Caco-2 (cell line): ENCODE measurements at regions of chr1 and their contacts with region 1.

Region 1: GRCh38 chr1:230978491-230979388 is at the starts of genes ARV1 and TTC13:
- DNase-seq: peak; percentile 99
- H3K4me3 ChIP-seq: peak within 1 kb of the TSS; percentile 96
- H3K4me3 Mint-ChIP-seq: no peak within 1 kb of the TSS
- H3K27ac Mint-ChIP-seq: peak within 1 kb of the TSS; percentile 65
- H3K4me1 ChIP-seq: peaks cover 18% of the 10 kb centered on the region
- H3K4me1 Mint-ChIP-seq: peaks cover 15% of the 10 kb centered on the region
- H3K27me3 ChIP-seq: no peaks in the 10 kb centered on the region
- H3K27me3 Mint-ChIP-seq: no peaks in the 10 kb centered on the region
- CTCF ChIP-seq: peak; percentile 59 to 84
- total RNA-seq, gene ARV1: 8.6 and 9.8 TPM in 2 replicates
- total RNA-seq, gene TTC13: 55.8 and 57.6 TPM in 2 replicates

Region 2: DNA sequence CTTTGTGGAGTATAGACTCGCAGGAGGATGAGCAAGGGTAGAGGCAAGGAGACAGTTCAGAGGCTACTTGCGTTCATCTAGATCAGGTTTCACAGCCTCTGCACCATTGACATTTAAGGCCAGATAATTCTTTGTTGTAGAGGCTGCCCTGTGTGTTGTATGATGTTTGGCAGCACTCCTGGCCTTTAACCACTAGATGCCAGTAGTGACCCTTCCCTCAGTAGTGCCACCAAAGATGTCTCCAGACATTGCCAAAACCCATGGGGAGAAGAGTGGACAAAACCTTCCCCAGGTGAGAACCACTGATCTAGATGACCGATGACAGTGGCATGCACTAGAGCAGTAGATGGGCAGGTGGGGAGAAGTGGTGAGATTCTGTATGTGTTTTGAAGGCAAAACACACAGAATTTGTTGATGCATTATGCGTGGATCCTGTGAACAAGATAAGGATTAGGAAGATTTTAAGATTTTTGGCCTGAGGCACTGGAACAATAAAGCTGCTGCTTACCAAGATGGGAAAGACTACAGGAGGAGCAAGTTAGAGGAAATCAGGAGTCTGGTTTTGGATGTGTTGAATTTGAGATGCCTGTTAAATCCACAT is 346.4 kb before region 1 on chr1:
- CTCF ChIA-PET with region 1: no interaction called
- POLR2A ChIA-PET with region 1: no interaction called
- intact Hi-C with region 1: loop called (anchors 1 kb)
- DNase-seq: peak; percentile 56 to 65
- H3K4me3 ChIP-seq: no peak overlapping the region
- H3K4me3 Mint-ChIP-seq: no peak overlapping the region
- H3K27ac Mint-ChIP-seq: no peak overlapping the region
- H3K4me1 ChIP-seq: no peaks in the 10 kb centered on the region
- H3K4me1 Mint-ChIP-seq: no peaks in the 10 kb centered on the region
- H3K27me3 ChIP-seq: no peaks in the 10 kb centered on the region
- H3K27me3 Mint-ChIP-seq: no peaks in the 10 kb centered on the region
- CTCF ChIP-seq: peak; percentile 75 to 84

Region 3: GRCh38 chr1:230797942-230798418 is 180.8 kb before region 1 on chr1:
- CTCF ChIA-PET with region 1: interaction called, 11 read pairs
- POLR2A ChIA-PET with region 1: no interaction called
- intact Hi-C with region 1: loop called (anchors 1 kb)
- DNase-seq: peak; percentile 70 to 73
- H3K4me3 ChIP-seq: no peak overlapping the region
- H3K4me3 Mint-ChIP-seq: no peak overlapping the region
- H3K27ac Mint-ChIP-seq: no peak overlapping the region
- H3K4me1 ChIP-seq: no peaks in the 10 kb centered on the region
- H3K4me1 Mint-ChIP-seq: peaks cover 7% of the 10 kb centered on the region
- H3K27me3 ChIP-seq: no peaks in the 10 kb centered on the region
- H3K27me3 Mint-ChIP-seq: no peaks in the 10 kb centered on the region
- CTCF ChIP-seq: peak; percentile 76 to 83

Region 4: DNA sequence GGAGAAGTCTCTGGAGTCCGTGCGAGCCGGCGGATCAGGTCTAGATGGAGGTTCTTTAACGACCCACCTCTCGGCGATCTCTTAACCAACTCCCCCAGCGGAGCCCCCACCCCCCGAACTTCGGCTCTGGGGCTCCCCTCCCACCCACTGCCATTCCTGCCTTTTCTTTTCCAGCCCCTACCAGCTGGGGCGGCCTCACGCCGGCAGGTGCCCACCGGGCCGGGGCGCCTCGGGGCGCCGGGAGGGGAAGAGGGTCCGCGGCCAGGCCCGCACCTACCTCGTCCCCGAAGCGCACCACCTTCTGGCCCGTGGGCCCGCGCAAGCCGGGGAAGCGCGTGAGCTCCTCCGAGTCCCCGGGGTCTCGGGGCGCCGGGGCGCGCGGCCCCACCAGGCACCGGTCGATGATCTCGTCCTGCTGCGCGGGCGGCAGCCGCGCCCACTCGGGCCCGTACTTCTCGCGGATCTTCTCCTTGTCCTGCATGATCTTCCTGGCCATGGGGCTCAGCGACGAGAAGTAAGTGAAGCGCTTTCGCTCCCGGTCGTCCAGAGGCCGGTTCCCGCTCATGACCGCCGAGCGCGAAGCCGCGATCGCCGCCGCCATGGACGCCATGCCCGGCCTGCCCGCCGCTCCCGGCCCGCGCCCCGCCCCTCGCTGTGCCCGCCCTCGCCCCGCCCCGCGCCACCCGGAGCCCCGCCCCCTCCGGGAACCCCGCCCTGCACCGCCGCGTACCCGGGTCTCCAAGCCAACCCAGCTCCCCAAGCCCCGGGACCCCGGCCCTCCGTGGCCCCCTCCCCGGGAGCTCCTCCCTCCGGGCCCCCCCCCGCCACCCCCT is 110.6 kb before region 1 on chr1 and contains the start of gene C1orf198:
- CTCF ChIA-PET with region 1: interaction called, 5 read pairs
- POLR2A ChIA-PET with region 1: interaction called, 7 read pairs
- intact Hi-C with region 1: loop called (anchors 1 kb)
- DNase-seq: peak; percentile 81 to 87
- H3K4me3 ChIP-seq: peak within 1 kb of the TSS; percentile 90
- H3K4me3 Mint-ChIP-seq: peak within 1 kb of the TSS; percentile 81
- H3K27ac Mint-ChIP-seq: peak within 1 kb of the TSS; percentile 97
- H3K4me1 ChIP-seq: peaks cover 35% of the 10 kb centered on the region
- H3K4me1 Mint-ChIP-seq: peaks cover 42% of the 10 kb centered on the region
- H3K27me3 ChIP-seq: no peaks in the 10 kb centered on the region
- H3K27me3 Mint-ChIP-seq: no peaks in the 10 kb centered on the region
- CTCF ChIP-seq: no peak
- total RNA-seq, gene C1orf198: 80.1 and 92.2 TPM in 2 replicates

Region 5: GRCh38 chr1:230899841-230900251 is 78.9 kb before region 1 on chr1:
- CTCF ChIA-PET with region 1: no interaction called
- POLR2A ChIA-PET with region 1: no interaction called
- intact Hi-C with region 1: no loop called
- DNase-seq: peak; percentile 57 to 58
- H3K4me3 ChIP-seq: no peak overlapping the region
- H3K4me3 Mint-ChIP-seq: peak overlapping the region; percentile 0
- H3K27ac Mint-ChIP-seq: peak overlapping the region; percentile 42
- H3K4me1 ChIP-seq: peaks cover 33% of the 10 kb centered on the region
- H3K4me1 Mint-ChIP-seq: peaks cover 32% of the 10 kb centered on the region
- H3K27me3 ChIP-seq: no peaks in the 10 kb centered on the region
- H3K27me3 Mint-ChIP-seq: no peaks in the 10 kb centered on the region
- CTCF ChIP-seq: no peak

Region 6: GRCh38 chr1:230917284-230918135 is 61.2 kb before region 1 on chr1:
- CTCF ChIA-PET with region 1: interaction called, 3 read pairs
- POLR2A ChIA-PET with region 1: no interaction called
- intact Hi-C with region 1: loop called (anchors 1 kb)
- DNase-seq: peak; percentile 84
- H3K4me3 ChIP-seq: no peak overlapping the region
- H3K4me3 Mint-ChIP-seq: no peak overlapping the region
- H3K27ac Mint-ChIP-seq: no peak overlapping the region
- H3K4me1 ChIP-seq: peaks cover 25% of the 10 kb centered on the region
- H3K4me1 Mint-ChIP-seq: peaks cover 33% of the 10 kb centered on the region
- H3K27me3 ChIP-seq: no peaks in the 10 kb centered on the region
- H3K27me3 Mint-ChIP-seq: no peaks in the 10 kb centered on the region
- CTCF ChIP-seq: peak; percentile 69 to 70

Region 7: GRCh38 chr1:230922620-230923019 is 56.1 kb before region 1 on chr1:
- CTCF ChIA-PET with region 1: interaction called, 3 read pairs
- POLR2A ChIA-PET with region 1: no interaction called
- intact Hi-C with region 1: loop called (anchors 1 kb)
- DNase-seq: peak in 1 of 2 experiments; percentile 27
- H3K4me3 ChIP-seq: no peak overlapping the region
- H3K4me3 Mint-ChIP-seq: no peak overlapping the region
- H3K27ac Mint-ChIP-seq: peak overlapping the region; percentile 40
- H3K4me1 ChIP-seq: peaks cover 20% of the 10 kb centered on the region
- H3K4me1 Mint-ChIP-seq: peaks cover 22% of the 10 kb centered on the region
- H3K27me3 ChIP-seq: no peaks in the 10 kb centered on the region
- H3K27me3 Mint-ChIP-seq: no peaks in the 10 kb centered on the region
- CTCF ChIP-seq: peak in 1 of 2 experiments; percentile 44

Region 8: DNA sequence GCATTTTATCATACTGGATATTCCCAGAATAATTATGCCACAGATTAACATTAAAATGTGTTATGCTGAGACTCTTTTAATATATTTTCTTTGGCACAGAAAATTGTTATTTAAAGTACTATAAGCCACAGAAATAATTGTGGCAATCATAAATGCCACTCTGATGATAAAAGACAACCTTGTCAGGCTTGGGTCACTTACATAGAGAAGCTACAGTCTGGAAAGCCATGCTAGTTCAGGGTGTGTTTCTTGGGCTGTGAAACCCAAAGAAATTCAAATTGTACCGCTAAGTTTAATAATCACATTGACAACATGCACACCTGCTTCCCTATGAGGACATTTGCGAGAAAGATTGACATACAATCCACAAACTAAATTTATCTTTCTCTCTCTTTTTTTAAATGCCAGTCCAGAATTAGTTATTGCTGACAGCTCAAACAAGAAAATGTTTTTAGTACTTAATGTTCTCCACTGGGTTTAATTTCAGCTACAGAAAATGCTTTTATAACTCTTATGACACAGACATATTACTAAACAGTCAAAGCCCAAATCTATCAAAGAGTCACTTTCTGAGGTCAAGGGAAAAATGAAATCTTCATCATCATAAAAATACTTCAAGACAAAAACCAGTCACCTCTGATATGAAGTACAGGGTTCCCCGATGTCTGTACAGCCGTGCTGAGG is 38.8 kb before region 1 on chr1:
- CTCF ChIA-PET with region 1: interaction called, 13 read pairs
- POLR2A ChIA-PET with region 1: interaction called, 5 read pairs
- intact Hi-C with region 1: loop called (anchors 1 kb)
- DNase-seq: no peak
- H3K4me3 ChIP-seq: no peak overlapping the region
- H3K4me3 Mint-ChIP-seq: no peak overlapping the region
- H3K27ac Mint-ChIP-seq: no peak overlapping the region
- H3K4me1 ChIP-seq: peaks cover 50% of the 10 kb centered on the region
- H3K4me1 Mint-ChIP-seq: peaks cover 32% of the 10 kb centered on the region
- H3K27me3 ChIP-seq: no peaks in the 10 kb centered on the region
- H3K27me3 Mint-ChIP-seq: no peaks in the 10 kb centered on the region
- CTCF ChIP-seq: no peak

Region 9: GRCh38 chr1:231020139-231020601 is 41.4 kb after region 1 on chr1:
- CTCF ChIA-PET with region 1: no interaction called
- POLR2A ChIA-PET with region 1: no interaction called
- intact Hi-C with region 1: no loop called
- DNase-seq: no peak
- H3K4me3 ChIP-seq: no peak overlapping the region
- H3K4me3 Mint-ChIP-seq: no peak overlapping the region
- H3K27ac Mint-ChIP-seq: no peak overlapping the region
- H3K4me1 ChIP-seq: no peaks in the 10 kb centered on the region
- H3K4me1 Mint-ChIP-seq: no peaks in the 10 kb centered on the region
- H3K27me3 ChIP-seq: no peaks in the 10 kb centered on the region
- H3K27me3 Mint-ChIP-seq: no peaks in the 10 kb centered on the region
- CTCF ChIP-seq: no peak

Region 10: GRCh38 chr1:231192620-231193163 is 214.0 kb after region 1 on chr1:
- CTCF ChIA-PET with region 1: no interaction called
- POLR2A ChIA-PET with region 1: no interaction called
- intact Hi-C with region 1: no loop called
- DNase-seq: no peak
- H3K4me3 ChIP-seq: no peak overlapping the region
- H3K4me3 Mint-ChIP-seq: no peak overlapping the region
- H3K27ac Mint-ChIP-seq: no peak overlapping the region
- H3K4me1 ChIP-seq: peaks cover 37% of the 10 kb centered on the region
- H3K4me1 Mint-ChIP-seq: peaks cover 23% of the 10 kb centered on the region
- H3K27me3 ChIP-seq: no peaks in the 10 kb centered on the region; the same call in 1 of the 2 replicates
- H3K27me3 Mint-ChIP-seq: no peaks in the 10 kb centered on the region
- CTCF ChIP-seq: no peak